Natural killer cell (primary cell): ENCODE measurements at regions of chr18 and their contacts with region 1.

Region 1: GRCh38 chr18:13726232-13726971 is at the starts of genes FAM210A and RNMT:
- DNase-seq: peak; percentile 89 to 98
- ATAC-seq: peak; percentile 90 to 96 (median 95)
- H3K4me3 ChIP-seq: peak within 1 kb of the TSS; percentile 76
- H3K4me3 Mint-ChIP-seq: peak within 1 kb of the TSS; percentile 85
- H3K27ac ChIP-seq: peak within 1 kb of the TSS; percentile 86
- H3K27ac Mint-ChIP-seq: peak within 1 kb of the TSS; percentile 79 to 97
- H3K4me1 ChIP-seq: peaks cover 15% of the 10 kb centered on the region
- H3K4me1 Mint-ChIP-seq: peaks cover 40% of the 10 kb centered on the region in 2 donors
- H3K27me3 ChIP-seq: no peaks in the 10 kb centered on the region
- H3K27me3 Mint-ChIP-seq: no peaks in the 10 kb centered on the region
- CTCF ChIP-seq: no peak
- total RNA-seq, gene FAM210A: 5.4 to 11.2 (median 9.2) TPM
- total RNA-seq, gene RNMT: 68.9 to 77.4 (median 71.9) TPM

Region 2: DNA sequence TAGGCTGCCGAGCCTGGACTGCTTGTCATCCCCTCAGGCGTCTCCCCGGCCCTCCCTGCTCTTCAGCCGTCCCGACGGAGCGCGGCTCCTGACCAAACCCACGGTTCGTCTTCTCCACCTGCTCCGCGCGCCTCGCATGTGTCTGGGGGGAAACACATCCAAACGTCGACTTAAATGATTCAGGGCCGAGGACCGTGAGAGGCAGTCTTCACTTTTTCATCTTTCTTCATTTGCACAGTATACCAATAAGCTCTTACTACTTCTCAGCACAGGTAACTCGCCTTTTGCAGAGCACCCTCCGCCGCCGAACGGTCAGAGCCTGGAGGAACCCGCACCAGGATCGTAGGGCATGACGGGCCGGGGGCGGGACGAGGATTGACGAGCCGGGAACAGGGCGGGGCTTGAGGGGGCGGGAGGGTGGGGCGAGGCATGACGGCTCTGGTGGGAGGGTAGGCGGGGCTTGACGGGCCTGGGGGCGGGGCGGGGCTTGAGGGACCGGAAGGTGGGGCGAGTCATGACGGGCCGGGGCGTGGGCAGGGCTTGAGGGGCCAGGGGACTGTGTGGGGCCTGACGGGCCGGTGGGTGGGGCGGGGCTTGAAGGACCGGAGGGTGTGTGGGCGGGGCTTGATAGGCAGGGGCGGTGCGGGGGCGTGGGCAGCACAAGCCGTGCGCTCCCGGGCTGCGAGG is 778.9 kb before region 1 on chr18 and contains the start of gene SEH1L:
- intact Hi-C with region 1: loop called (anchors 5 kb)
- DNase-seq: peak; percentile 96 to 98
- ATAC-seq: peak; percentile 86 to 96 (median 86)
- H3K4me3 ChIP-seq: peak within 1 kb of the TSS; percentile 93
- H3K4me3 Mint-ChIP-seq: peak within 1 kb of the TSS; percentile 97
- H3K27ac ChIP-seq: peak within 1 kb of the TSS; percentile 96
- H3K27ac Mint-ChIP-seq: peak within 1 kb of the TSS; percentile 90 to 92
- H3K4me1 ChIP-seq: peaks cover 17% of the 10 kb centered on the region
- H3K4me1 Mint-ChIP-seq: peaks cover 11 to 16% of the 10 kb centered on the region in 2 donors
- H3K27me3 ChIP-seq: no peaks in the 10 kb centered on the region
- H3K27me3 Mint-ChIP-seq: no peaks in the 10 kb centered on the region
- CTCF ChIP-seq: no peak
- total RNA-seq, gene SEH1L: 24.5 to 28.4 (median 26.5) TPM

Region 3: DNA sequence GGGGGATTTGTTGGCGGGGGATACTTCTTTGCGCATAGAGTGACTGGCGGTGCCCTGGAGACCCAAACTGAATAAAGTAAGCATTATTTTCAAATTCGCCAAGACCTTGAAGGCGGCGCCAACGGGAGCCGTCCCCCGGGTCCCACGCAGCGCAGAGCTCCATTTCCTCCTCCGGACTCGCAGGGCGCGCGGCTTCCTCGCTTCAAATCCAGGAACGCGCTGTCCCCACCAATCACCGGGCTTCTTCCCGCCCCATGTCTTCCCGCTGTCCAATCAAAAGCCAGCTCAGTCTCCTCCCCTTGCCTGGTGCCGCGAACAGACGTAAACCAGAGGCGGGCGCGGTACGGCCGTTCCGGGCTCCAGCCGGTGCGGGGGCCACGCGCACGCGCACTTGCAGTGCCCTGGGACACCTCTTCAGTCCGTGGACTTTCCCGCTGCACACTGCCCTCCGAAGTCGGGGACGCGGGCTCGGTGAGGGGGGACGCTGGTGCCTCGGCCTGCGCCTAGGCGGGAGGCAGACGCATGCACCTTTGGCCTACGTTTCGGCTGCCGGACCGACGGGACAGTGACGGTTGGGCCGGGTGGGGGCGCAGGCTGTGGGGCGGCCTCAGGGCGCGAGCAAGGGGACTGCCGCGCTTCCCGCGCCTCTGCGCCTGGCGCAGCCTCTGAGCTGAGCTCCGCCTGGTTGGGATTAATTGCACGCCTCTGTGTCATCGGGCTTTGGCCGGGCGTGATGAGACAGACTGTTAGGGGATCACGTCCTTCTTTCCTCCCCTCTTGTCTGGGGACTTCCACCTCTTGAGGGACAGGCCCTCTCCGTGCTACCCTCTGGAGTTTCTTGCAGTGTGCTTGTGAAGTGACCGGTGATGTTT is 735.2 kb before region 1 on chr18 and contains the start of gene CEP192:
- intact Hi-C with region 1: loop called (anchors 2 kb)
- DNase-seq: peak; percentile 95 to 99
- ATAC-seq: peak; percentile 92 to 96 (median 94)
- H3K4me3 ChIP-seq: peak within 1 kb of the TSS; percentile 56
- H3K4me3 Mint-ChIP-seq: peak within 1 kb of the TSS; percentile 97
- H3K27ac ChIP-seq: peak within 1 kb of the TSS; percentile 82
- H3K27ac Mint-ChIP-seq: peak within 1 kb of the TSS; percentile 83 to 91
- H3K4me1 ChIP-seq: peaks cover 21% of the 10 kb centered on the region
- H3K4me1 Mint-ChIP-seq: peaks cover 37 to 39% of the 10 kb centered on the region in 2 donors
- H3K27me3 ChIP-seq: no peaks in the 10 kb centered on the region
- H3K27me3 Mint-ChIP-seq: peaks cover 0 to 3% of the 10 kb centered on the region in 2 donors
- CTCF ChIP-seq: peak; percentile 22
- total RNA-seq, gene CEP192: 41.3 to 47.9 (median 43.4) TPM

Region 4: DNA sequence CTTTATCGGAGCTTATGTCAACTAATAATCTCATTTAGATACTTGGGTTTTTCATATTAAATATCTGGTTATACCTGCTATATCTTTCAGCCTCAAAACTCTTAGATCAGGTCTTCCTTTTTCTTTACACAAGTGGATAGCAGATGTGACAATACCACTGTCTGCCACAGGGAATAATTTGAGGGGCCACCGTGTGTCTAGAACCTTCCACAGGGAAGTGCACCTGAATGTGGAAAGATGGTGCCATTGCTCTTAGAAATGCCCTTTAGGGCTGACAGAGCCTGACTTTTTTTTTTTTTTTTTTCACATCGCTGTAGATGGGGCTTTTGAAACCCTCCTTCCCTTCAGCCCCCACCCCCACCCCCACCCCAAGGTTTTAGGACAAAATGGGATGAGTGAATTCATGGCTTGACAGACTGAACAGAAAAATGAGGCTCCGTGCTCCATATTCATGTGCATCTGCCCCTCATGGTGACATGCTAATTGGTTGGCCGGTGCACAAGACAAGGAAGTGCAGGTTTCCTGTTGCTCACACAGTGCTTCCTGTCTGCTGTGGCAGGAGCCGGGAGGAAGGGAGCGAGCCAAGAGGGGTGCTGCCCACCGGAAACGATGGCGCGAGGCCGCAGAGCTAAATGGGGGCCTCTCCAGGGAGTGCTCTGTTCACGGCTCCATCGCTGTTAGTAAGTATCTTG is 261.8 kb before region 1 on chr18:
- intact Hi-C with region 1: loop called (anchors 2 kb)
- DNase-seq: peak; percentile 53 to 83
- ATAC-seq: peak; percentile 88 to 90 (median 89)
- H3K4me3 ChIP-seq: peak overlapping the region; percentile 37
- H3K4me3 Mint-ChIP-seq: peak overlapping the region; percentile 97
- H3K27ac ChIP-seq: peak overlapping the region; percentile 72
- H3K27ac Mint-ChIP-seq: peak overlapping the region; percentile 91 to 96
- H3K4me1 ChIP-seq: peaks cover 31% of the 10 kb centered on the region
- H3K4me1 Mint-ChIP-seq: peaks cover 56 to 62% of the 10 kb centered on the region in 2 donors
- H3K27me3 ChIP-seq: no peaks in the 10 kb centered on the region
- H3K27me3 Mint-ChIP-seq: no peaks in the 10 kb centered on the region
- CTCF ChIP-seq: no peak

Region 5: DNA sequence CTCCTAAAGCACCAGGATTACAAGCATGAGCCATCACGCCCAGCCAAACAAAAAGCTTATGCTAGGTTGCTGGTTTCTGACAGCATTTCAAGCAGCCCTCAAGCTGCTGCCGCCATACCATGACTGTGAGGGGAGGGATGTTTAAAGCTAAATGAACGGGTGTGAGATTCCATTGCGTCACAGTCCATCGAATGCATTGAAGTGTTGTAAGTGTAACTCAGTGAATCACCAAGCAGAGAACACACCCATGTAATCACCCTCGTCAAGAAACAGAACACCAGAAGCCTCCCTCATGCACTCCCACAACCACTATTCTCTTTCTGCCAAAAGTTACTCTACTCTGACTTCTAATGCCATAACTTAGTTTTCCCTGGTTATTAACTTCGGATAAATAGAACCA is 64.8 kb after region 1 on chr18:
- intact Hi-C with region 1: loop called (anchors 10 kb)
- DNase-seq: no peak
- ATAC-seq: no peak
- H3K4me3 ChIP-seq: no peak overlapping the region
- H3K4me3 Mint-ChIP-seq: no peak overlapping the region
- H3K27ac ChIP-seq: no peak overlapping the region
- H3K27ac Mint-ChIP-seq: no peak overlapping the region
- H3K4me1 ChIP-seq: no peaks in the 10 kb centered on the region
- H3K4me1 Mint-ChIP-seq: no peaks in the 10 kb centered on the region
- H3K27me3 ChIP-seq: no peaks in the 10 kb centered on the region
- H3K27me3 Mint-ChIP-seq: peaks cover 0 to 2% of the 10 kb centered on the region in 2 donors
- CTCF ChIP-seq: no peak

Region 6: DNA sequence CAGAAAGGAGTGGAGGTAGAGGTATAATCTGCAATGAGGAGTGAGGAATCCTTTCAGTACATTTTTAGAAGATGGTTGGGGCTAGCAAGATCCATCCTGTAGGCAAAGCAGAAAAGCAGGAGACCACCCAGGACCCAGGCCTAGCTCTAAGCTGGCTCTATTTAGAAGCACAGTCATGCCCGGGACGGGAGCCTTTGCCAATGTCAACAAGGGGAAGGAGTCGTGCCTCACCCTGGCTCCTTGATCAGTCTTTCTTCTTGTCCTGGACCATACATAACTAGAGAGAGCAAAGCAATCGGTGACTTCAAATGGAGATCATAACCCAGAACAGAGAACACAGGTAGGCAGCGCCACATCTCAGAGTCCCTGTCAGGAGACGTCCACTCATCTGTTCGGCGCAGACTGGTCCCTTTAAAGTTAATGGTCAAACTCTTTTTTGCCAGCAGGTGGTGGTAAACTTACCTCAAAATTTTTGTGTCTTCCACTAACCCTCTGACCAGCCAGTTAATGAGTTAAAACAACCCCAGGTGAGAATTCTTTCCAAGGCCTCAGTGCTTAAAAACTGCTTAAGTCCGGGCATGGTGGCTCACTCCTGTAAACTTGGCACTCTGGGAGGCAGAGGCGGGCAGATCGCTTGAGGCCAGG is 105.6 kb after region 1 on chr18:
- intact Hi-C with region 1: no loop called
- DNase-seq: no peak
- ATAC-seq: no peak
- H3K4me3 ChIP-seq: no peak overlapping the region
- H3K4me3 Mint-ChIP-seq: no peak overlapping the region
- H3K27ac ChIP-seq: no peak overlapping the region
- H3K27ac Mint-ChIP-seq: no peak overlapping the region
- H3K4me1 ChIP-seq: no peaks in the 10 kb centered on the region
- H3K4me1 Mint-ChIP-seq: no peaks in the 10 kb centered on the region
- H3K27me3 ChIP-seq: no peaks in the 10 kb centered on the region
- H3K27me3 Mint-ChIP-seq: peaks cover 8 to 18% of the 10 kb centered on the region in 2 donors
- CTCF ChIP-seq: no peak